AG04450 (cell line): ENCODE measurements at regions of chr4 and their contacts with region 1.

Region 1: DNA sequence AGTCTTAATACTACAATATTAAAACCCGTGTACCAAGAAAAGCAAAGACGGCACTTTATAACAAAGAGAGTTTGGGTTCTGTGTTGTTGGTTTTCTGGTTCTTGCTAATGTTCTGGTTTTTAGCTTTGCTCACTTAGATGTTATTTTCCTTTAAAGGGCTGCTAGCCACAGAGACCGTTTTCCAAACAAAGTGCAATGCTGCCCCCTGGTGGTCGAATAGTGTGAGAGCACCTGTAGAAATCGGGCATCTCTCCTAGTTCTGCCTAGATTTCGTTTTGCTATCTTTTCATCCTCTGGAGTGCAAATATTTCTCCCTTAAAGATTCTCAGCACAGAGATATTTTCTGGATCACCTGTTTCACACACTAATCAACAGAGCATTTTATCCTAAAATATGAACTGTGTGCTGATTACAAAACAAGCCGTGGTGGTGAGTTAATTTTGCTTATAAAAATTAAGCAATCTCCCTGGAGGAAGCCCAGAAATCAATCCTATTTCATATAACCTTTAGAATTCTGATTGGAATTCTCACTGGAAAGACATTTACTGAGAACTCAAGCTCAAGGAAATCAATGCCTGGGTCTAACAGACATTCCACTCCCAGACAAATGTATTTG is 334.5 kb upstream of the NOCT start:
- DNase-seq: peak; percentile 65
- H3K4me3 ChIP-seq: no peak overlapping the region
- H3K27ac ChIP-seq: no peak overlapping the region
- H3K27me3 ChIP-seq: no peaks in the 10 kb centered on the region
- CTCF ChIP-seq: peak; percentile 85

Region 2: GRCh38 chr4:137819964-137820383 is 861.1 kb before region 1 on chr4:
- CTCF ChIA-PET with region 1: interaction called, 13 read pairs
- POLR2A ChIA-PET with region 1: no interaction called
- DNase-seq: peak; percentile 18
- H3K4me3 ChIP-seq: no peak overlapping the region
- H3K27ac ChIP-seq: no peak overlapping the region
- H3K27me3 ChIP-seq: no peaks in the 10 kb centered on the region
- CTCF ChIP-seq: peak; percentile 71

Region 3: DNA sequence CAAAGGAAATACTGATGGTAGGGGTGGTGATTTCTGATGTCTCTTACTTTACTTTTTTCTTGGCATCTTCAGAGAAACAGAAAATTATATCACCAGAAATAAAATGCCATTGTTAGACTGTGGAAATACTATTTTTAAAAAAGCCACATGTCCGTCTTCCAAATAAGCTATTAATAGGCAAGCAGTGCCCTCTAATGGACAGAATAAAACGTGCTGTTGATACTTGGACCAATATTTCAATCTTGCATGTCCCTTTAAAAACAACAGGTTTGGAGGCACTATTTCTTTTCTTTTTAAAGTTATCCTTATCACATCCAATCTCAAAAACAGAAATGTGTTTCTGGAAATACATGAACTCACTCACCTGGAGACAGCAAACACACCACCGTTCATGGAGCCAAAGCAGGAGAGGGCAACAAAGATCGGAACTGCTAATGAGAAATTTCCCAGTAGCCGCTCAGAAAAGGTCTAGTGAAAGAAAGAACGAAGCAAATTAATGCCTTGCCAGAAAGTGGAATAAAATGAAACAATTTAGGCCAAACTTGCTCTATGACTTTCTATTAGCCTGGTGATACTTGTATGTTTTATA is 498.2 kb before region 1 on chr4:
- CTCF ChIA-PET with region 1: interaction called, 21 read pairs
- POLR2A ChIA-PET with region 1: no interaction called
- DNase-seq: peak; percentile 26
- H3K4me3 ChIP-seq: no peak overlapping the region
- H3K27ac ChIP-seq: no peak overlapping the region
- H3K27me3 ChIP-seq: no peaks in the 10 kb centered on the region
- CTCF ChIP-seq: peak; percentile 68

Region 4: GRCh38 chr4:138242076-138242833 is 438.8 kb before region 1 on chr4 and contains the start of gene SLC7A11:
- CTCF ChIA-PET with region 1: interaction called, 14 read pairs
- POLR2A ChIA-PET with region 1: no interaction called
- DNase-seq: peak; percentile 96
- H3K4me3 ChIP-seq: peak within 1 kb of the TSS; percentile 72
- H3K27ac ChIP-seq: peak within 1 kb of the TSS; percentile 98
- H3K27me3 ChIP-seq: no peaks in the 10 kb centered on the region
- CTCF ChIP-seq: no peak
- polyA plus RNA-seq, gene SLC7A11: 59.2 and 80.5 TPM in 2 replicates

Region 5: DNA sequence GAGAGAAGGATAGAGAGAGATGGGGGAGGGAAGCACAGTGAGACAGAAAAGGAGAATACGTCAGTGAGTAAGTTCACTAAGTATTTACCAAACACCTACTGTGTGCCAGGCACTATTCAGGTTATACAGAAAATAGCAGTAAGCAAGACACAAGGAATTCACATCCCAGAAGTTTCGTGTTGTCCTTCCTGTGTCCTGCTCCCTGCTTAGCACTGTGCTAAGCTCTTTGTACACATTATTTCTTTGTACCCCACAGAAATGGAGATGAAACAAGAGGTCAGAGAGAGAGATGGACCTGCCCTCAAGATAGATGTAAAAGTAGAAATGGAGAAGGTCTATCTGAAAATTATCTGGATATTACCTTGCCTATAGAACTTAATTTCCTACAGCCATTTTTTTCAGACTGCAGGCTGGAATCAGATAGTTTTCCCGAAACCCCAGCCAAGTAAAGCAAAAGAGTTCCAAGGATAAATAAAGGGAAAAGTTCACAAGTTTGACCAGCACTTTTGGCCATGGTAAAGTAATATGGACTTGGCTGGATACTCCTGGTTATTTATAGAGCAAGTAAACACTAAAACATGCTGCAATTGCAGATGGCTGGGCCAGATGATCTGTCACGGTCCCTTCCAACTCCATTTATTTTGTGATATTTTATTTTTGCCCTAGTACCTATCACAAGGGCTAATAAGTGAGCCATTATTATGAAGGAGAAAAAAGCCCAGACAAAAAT is 85.2 kb before region 1 on chr4:
- CTCF ChIA-PET with region 1: no interaction called
- POLR2A ChIA-PET with region 1: no interaction called
- DNase-seq: no peak
- H3K4me3 ChIP-seq: no peak overlapping the region
- H3K27ac ChIP-seq: no peak overlapping the region
- H3K27me3 ChIP-seq: no peaks in the 10 kb centered on the region
- CTCF ChIP-seq: no peak

Region 6: DNA sequence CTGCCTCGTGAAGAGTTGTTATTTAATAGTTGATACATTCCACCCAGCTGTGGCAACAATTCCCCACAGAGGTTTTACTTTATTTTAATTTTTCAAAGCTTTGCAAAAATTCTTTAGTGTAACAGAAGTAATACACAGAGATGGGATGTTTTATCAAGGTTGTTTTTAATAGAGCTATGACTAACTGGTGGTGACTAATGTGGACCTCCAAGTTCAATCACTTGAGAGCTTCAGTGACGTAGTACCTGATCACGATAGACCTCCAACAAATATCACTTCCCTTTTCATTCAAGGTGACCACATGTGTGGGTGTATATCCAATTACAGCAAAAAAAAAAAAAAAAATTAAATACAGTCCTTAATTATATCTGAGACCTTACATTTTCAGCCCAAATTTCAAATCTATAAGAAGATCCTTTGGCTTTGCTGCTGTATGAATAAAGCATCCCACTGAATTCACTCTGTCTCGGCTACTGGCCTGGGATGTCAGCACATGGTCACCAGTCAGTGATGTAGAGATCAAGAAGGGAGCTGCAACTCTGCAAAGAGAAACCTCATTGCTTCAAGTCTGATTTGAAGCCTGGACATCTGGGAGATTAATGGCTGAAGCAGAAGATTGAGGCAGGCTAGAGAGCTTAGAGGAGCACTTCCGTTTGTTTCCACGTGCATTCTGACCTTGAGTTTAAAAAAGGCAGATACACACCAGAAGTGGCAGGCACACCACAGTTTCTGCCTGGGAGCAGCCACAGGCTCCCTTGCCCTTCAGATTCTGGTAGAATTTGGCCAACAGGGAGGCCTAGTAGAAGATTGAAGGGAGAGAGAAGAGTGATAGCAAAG is 11.4 kb before region 1 on chr4:
- CTCF ChIA-PET with region 1: interaction called, 15 read pairs
- POLR2A ChIA-PET with region 1: no interaction called
- DNase-seq: peak; percentile 81
- H3K4me3 ChIP-seq: no peak overlapping the region
- H3K27ac ChIP-seq: peak overlapping the region; percentile 60
- H3K27me3 ChIP-seq: no peaks in the 10 kb centered on the region
- CTCF ChIP-seq: no peak